ENCODE measurements at regions of chr3 and their contacts with region 1.

Region 1: DNA sequence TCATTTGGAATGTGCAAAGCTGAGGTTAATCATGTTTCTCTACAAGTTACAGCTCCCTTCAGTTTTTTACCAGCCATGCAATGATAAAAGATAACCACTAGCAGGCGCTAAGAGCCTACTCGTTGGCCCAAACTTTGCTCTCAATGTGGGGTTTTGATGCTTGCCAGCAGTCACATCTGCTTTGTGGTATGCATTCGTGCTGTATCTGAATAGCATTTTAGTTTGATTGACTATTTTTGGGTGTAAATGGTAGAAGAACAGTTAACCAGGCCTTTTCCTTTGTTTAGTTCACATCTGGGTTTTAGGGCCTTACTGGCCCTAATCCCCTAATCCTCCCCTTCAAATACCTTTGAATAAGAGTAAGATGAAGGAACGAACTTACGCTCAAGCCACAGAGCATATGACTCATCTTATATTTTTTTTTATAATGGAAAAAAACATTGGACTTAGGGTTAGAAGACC is 4.4 kb upstream of the CLDN11 start:
- DNase-seq: peak in 2 of 5 donors; percentile 30 to 32
- ATAC-seq: peak; percentile 50 to 53 (median 52)
- H3K4me3 ChIP-seq: no peak overlapping the region
- H3K27ac ChIP-seq: no peak overlapping the region
- H3K4me1 ChIP-seq: peaks cover 0 to 13% (median 8%) of the 10 kb centered on the region in 12 donors
- H3K27me3 ChIP-seq: peaks cover 0 to 21% (median 17%) of the 10 kb centered on the region in 9 donors
- CTCF ChIP-seq: peak; percentile 80 to 97 (median 94)
- POLR2A ChIP-seq: no peak

Region 2: GRCh38 chr3:170307671-170308403 is 106.4 kb before region 1 on chr3:
- intact Hi-C with region 1: loop called (anchors 1 to 5 kb)
- DNase-seq: no peak
- ATAC-seq: no peak
- H3K4me3 ChIP-seq: no peak overlapping the region
- H3K27ac ChIP-seq: no peak overlapping the region
- H3K4me1 ChIP-seq: no peaks in the 10 kb centered on the region
- H3K27me3 ChIP-seq: no peaks in the 10 kb centered on the region
- CTCF ChIP-seq: no peak
- POLR2A ChIP-seq: no peak

Region 3: DNA sequence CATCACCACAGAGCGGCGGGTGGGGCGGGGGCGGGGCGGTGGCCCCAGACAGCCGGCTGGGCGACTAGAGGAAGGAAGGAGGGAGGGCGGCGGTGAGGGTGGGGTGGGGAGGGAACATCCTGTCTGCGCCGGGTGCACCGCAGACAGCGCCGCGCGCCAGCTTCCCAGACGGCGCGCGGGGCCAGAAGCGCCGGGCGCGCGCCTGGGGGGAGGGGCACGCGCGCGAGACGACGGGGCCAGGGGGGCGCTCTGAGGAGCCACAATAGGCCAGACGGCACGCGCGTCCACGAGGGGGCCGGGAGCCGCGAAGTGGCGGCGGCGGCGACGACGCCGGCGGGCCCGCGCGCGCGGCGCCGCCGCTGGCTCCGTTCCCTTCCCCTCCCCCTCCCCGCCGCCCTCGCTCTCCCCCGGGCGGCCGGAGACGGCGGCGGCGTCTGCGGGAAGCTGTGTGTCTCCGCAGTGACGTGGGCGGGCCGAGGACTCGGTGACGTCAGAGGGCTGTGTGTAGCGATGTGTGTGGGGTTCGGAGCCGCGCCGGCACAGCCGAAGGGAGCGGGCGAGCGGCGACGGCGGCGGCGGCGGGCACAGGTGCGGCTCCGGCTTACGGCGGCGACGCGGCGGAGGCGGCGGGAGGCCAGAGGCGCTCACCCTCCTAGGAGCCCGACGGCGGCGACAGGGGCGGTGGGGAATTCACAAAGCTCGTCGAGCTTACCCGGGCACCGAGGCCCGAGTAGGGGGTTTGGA is 56.9 kb before region 1 on chr3 and contains the start of gene SKIL:
- intact Hi-C with region 1: loop called in 1 of 10 experiments (anchors 5 kb)
- DNase-seq: peak; percentile 98 to 99 (median 99)
- ATAC-seq: peak; percentile 73 to 88 (median 86)
- H3K4me3 ChIP-seq: peak within 1 kb of the TSS; percentile 64 to 99 (median 98)
- H3K27ac ChIP-seq: peak within 1 kb of the TSS; percentile 95 to 100 (median 99)
- H3K4me1 ChIP-seq: peaks cover 0 to 65% (median 33%) of the 10 kb centered on the region in 12 donors
- H3K27me3 ChIP-seq: no peaks in the 10 kb centered on the region
- CTCF ChIP-seq: peak in 7 of 12 donors; percentile 9 to 37 (median 21)
- POLR2A ChIP-seq: peak in 1 of 2 donors; percentile 86
- total RNA-seq, gene SKIL: 12.8 to 33.6 (median 25.4) TPM

Region 4: GRCh38 chr3:170689893-170690660 is 275.8 kb after region 1 on chr3:
- intact Hi-C with region 1: loop called (anchors 2 to 5 kb)
- DNase-seq: peak; percentile 44 to 83 (median 59)
- ATAC-seq: peak in 3 of 4 donors; percentile 76 to 89 (median 77)
- H3K4me3 ChIP-seq: no peak overlapping the region
- H3K27ac ChIP-seq: no peak overlapping the region
- H3K4me1 ChIP-seq: peaks cover 0 to 7% (median 0%) of the 10 kb centered on the region in 12 donors
- H3K27me3 ChIP-seq: no peaks in the 10 kb centered on the region
- CTCF ChIP-seq: peak; percentile 67 to 82 (median 74)
- POLR2A ChIP-seq: no peak

Region 5: DNA sequence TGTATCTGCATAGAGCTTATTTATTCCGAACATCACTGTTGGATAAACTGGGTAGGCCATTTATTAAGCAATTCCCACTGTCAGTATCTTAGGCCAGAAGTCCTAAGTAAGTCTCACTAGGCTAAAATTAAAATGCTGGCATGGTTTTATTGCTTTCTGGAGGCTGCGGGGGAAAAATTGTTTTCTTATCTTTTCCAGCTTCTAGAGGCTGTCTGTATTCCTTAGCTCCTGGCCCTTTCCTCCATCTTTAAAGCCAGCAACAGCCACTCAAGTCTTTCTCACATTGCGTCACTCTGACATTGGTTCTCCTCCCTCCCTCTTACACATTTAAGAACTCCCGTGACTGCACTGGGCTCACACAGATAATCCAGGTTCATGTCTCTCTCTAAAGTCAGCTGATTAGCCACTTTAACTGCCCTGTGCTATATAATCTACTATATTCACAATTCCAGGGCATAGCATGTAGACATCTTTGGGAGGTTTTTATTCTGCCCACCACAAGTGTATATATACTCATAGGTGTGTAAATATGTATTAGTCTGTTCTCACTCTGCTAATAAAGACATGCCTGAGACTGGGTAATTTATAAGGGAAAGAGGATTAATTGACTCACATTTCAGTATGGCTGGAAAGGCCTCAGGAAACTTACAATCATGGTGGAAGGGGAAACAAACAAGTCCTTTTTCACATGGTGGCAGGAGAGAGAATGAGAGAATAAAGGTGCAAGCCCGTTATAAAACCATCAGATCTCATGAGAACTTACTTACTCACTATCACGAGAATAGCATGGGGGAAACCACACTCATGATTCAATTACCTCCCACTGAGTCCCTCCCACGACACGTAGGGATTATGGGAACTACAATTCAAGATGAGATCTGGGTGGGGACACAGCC is 285.2 kb after region 1 on chr3:
- intact Hi-C with region 1: loop called in 6 of 10 experiments (anchors 5 kb)
- DNase-seq: no peak
- ATAC-seq: peak; percentile 59 to 83 (median 82)
- H3K4me3 ChIP-seq: no peak overlapping the region
- H3K27ac ChIP-seq: peak overlapping the region in 3 of 12 donors; percentile 24 to 61 (median 50)
- H3K4me1 ChIP-seq: peaks cover 0 to 20% (median 0%) of the 10 kb centered on the region in 12 donors
- H3K27me3 ChIP-seq: no peaks in the 10 kb centered on the region
- CTCF ChIP-seq: no peak
- POLR2A ChIP-seq: no peak

Region 6: DNA sequence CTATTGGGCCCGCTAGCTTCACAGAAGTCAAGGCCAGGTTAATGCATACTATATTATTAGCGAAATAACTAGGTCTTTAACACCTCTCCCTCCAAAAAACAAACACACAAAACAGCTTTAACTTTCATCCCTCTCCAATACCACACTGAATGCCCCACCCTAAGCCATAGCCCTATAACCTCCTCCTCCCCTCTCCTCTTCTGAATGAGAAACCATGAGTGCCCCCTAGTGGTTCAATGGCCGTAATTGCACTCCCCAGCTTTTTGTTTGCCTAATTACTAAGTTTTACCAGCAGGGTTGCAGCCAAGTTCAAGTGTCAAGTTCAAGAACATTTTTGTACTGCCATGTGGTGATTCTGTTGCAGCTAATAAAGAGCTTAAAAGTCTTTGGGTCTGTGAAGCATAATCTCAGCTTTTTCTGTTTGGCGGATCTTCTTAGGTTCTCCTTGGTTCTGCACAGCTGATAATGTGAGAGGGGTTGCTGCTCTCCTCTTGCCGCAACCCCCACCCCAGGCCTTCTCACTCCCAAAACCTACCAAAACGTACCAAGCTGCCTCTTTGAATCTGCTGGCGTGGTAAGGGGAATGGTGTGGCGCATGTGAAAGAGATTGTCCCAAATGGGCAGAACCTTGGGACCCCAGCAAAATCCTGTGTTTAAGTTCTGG is 397.8 kb after region 1 on chr3:
- intact Hi-C with region 1: loop called (anchors 1 to 5 kb)
- DNase-seq: peak in 4 of 5 donors; percentile 35 to 48 (median 38)
- ATAC-seq: peak in 3 of 4 donors; percentile 64 to 83 (median 79)
- H3K4me3 ChIP-seq: no peak overlapping the region
- H3K27ac ChIP-seq: no peak overlapping the region
- H3K4me1 ChIP-seq: peaks cover 0 to 11% (median 0%) of the 10 kb centered on the region in 12 donors
- H3K27me3 ChIP-seq: no peaks in the 10 kb centered on the region
- CTCF ChIP-seq: peak; percentile 78 to 91 (median 85)
- POLR2A ChIP-seq: no peak

Region 7: DNA sequence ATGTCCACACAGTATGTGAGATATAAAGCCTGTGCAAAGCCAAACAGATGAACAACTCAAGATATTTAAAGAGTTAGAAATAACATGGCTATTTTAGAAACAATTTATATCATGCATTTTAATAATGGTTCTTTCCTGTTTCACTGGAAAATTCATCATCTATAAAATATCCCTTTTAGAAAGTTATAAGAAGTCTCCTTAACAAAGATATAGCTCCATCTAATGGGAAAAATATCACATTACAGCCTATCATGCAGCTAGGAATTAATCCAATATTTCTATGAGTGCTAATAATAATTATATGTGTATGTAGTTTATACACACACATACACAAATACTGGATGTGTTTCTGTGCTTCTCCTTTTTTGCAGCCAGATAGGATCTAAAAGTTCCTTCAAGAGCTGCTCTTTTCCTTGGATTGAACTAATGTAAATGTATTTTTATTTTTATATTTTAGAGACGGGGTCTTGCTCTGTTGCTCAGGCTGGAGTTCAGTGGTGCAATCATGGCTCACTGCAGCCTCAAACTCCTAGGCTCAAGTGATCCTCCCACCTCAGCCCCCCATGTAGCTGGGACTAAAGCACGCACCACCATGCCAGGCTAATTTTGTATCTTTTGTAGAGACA is 434.2 kb after region 1 on chr3:
- intact Hi-C with region 1: loop called in 1 of 10 experiments (anchors 10 kb)
- DNase-seq: no peak
- ATAC-seq: no peak
- H3K4me3 ChIP-seq: no peak overlapping the region
- H3K27ac ChIP-seq: no peak overlapping the region
- H3K4me1 ChIP-seq: no peaks in the 10 kb centered on the region
- H3K27me3 ChIP-seq: no peaks in the 10 kb centered on the region
- CTCF ChIP-seq: peak in 9 of 12 donors; percentile 6 to 58 (median 35)
- POLR2A ChIP-seq: no peak

Measured in heart left ventricle (tissue), 16 donors.